Ascending aorta (tissue), 2 donors: ENCODE measurements at regions of chr10 and their contacts with region 1.

Region 1: GRCh38 chr10:5534880-5535856 is 10.4 kb downstream of the CALML3 start:
- DNase-seq: peak in 1 of 2 donors; percentile 66
- H3K4me3 ChIP-seq: no peak overlapping the region
- H3K27ac ChIP-seq: peak overlapping the region; percentile 86 to 87
- H3K4me1 ChIP-seq: peaks cover 10 to 65% of the 10 kb centered on the region in 2 donors
- H3K27me3 ChIP-seq: no peaks in the 10 kb centered on the region
- CTCF ChIP-seq: no peak

Region 2: DNA sequence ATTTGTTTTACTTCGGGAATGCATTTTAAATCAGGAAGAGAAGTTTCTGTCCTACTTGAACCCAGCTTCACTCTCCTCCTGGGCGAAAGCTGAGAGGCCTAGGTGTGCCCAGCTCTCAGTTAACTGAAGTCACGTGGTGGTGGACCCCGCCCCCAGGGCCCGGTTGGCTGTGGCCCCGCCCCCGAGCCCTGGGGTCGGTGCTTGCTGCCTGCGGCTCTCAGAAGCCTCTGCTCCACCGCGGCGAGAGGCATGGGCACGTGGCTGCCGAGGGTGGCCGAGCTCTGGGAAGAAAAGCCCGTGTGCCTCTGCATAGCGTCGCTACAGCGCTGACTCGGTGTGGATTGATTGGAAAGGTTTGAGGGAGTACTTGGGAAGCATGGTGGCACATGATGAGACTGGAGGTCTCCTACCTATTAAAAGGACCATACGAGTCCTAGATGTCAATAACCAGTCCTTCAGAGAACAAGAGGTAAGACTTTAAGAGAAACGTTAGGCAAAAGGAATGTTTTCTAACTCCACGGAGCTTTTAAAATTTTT is 88.7 kb before region 1 on chr10:
- intact Hi-C with region 1: loop called (anchors 2 kb)
- DNase-seq: peak; percentile 84 to 96
- H3K4me3 ChIP-seq: peak overlapping the region; percentile 74
- H3K27ac ChIP-seq: peak overlapping the region; percentile 71 to 78
- H3K4me1 ChIP-seq: peaks cover 0 to 14% of the 10 kb centered on the region in 2 donors
- H3K27me3 ChIP-seq: no peaks in the 10 kb centered on the region
- CTCF ChIP-seq: no peak

Region 3: GRCh38 chr10:5548527-5549223 is 13.5 kb after region 1 on chr10:
- intact Hi-C with region 1: loop called (anchors 1 kb)
- DNase-seq: peak; percentile 63 to 86
- H3K4me3 ChIP-seq: no peak overlapping the region
- H3K27ac ChIP-seq: peak overlapping the region; percentile 93
- H3K4me1 ChIP-seq: peaks cover 22 to 56% of the 10 kb centered on the region in 2 donors
- H3K27me3 ChIP-seq: no peaks in the 10 kb centered on the region
- CTCF ChIP-seq: no peak

Region 4: DNA sequence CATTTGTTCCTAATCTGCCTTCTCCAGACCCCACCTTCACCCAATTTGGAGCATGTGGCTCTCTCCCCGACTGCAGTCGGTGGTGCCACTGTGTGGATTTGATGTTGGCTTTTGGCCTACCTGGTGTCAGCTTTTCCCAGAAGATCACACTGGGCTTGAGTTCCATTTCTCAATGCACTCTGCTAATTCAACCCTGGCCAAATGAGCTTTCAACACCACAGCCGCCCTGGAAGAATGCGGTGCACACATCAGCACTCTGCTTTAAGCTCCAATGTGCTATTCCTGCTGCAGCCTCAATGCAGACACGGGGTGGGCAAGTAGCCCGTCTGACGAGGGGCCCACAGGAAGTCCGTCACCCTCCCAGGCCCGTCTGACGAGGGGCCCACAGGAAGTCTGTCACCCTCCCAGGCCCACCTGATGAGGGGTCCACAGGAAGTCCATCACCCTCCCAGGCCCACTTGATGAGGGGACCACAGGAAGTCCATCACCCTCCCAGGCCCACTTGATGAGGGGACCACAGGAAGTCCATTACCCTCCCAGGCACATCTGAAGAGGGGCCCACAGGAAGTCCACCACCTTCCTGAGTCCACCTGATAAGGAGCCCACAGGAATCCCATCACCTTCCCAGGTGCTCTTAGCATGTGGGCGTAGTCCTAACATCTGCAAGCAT is 66.8 kb after region 1 on chr10:
- intact Hi-C with region 1: loop called (anchors 2 kb)
- DNase-seq: no peak
- H3K4me3 ChIP-seq: no peak overlapping the region
- H3K27ac ChIP-seq: peak overlapping the region; percentile 84 to 88
- H3K4me1 ChIP-seq: peaks cover 16 to 54% of the 10 kb centered on the region in 2 donors
- H3K27me3 ChIP-seq: no peaks in the 10 kb centered on the region
- CTCF ChIP-seq: no peak